Breast epithelium (tissue), 4 donors: ENCODE measurements at regions of chr11 and their contacts with region 1.

Region 1: DNA sequence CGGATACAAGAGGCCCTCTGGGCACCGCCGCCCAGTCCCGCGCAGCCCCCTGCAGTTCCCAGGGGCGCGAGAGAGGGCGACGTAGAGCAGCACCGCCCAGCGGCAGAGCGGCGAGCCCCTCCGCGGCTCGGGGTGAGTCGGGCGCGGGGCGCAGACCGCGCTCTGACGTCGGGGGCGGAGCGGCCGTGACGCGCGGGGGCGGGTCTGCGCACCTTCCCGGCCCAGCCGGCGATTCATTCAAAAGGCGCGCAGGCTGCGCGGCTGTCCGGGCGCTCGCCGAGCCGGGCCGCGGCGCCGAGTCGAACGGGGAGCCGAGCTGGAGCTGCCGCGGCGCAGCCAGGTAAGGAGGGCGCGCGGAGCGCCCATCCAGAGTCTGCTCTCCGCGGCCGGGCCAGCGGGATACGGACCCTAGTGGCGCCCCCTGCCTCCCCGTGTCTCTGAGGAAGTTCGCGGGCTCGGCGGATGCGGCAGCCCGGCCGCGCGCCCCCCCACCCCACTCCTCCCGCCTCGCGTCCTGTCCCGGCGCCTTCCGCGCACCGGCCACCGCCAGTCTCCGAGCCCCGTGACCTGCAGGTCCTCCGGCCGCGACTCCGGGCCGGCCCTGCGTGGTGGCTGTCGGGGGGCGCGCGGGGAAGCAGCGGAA is at the start of gene RELT:
- DNase-seq: peak; percentile 73 to 85
- H3K4me3 ChIP-seq: peak within 1 kb of the TSS; percentile 75 to 80 (median 75)
- H3K27ac ChIP-seq: peak within 1 kb of the TSS; percentile 86 to 92
- H3K4me1 ChIP-seq: peaks cover 0 to 4% of the 10 kb centered on the region in 2 donors
- H3K27me3 ChIP-seq: no peaks in the 10 kb centered on the region
- CTCF ChIP-seq: peak in 2 of 3 donors; percentile 81 to 97
- POLR2A ChIP-seq: no peak
- total RNA-seq, gene RELT: 2.2 to 3.7 (median 2.3) TPM

Region 2: GRCh38 chr11:73393479-73394380 is 17.4 kb after region 1 on chr11:
- intact Hi-C with region 1: loop called (anchors 2 kb)
- DNase-seq: peak; percentile 37 to 78
- H3K4me3 ChIP-seq: no peak overlapping the region
- H3K27ac ChIP-seq: no peak overlapping the region
- H3K4me1 ChIP-seq: no peaks in the 10 kb centered on the region
- H3K27me3 ChIP-seq: no peaks in the 10 kb centered on the region
- CTCF ChIP-seq: peak; percentile 18 to 85 (median 79)
- POLR2A ChIP-seq: no peak